Posterior cingulate gyrus (tissue), 11 donors: ENCODE measurements at regions of chr5 and their contacts with region 1.

Region 1: GRCh38 chr5:173057062-173057924 is 1.1 kb downstream of the CREBRF start:
- DNase-seq: peak; percentile 96 to 100 (median 98)

Region 2: GRCh38 chr5:173020643-173021042 is 36.6 kb before region 1 on chr5:
- intact Hi-C with region 1: loop called (anchors 5 kb)
- DNase-seq: peak; percentile 26 to 94 (median 67)

Region 3: DNA sequence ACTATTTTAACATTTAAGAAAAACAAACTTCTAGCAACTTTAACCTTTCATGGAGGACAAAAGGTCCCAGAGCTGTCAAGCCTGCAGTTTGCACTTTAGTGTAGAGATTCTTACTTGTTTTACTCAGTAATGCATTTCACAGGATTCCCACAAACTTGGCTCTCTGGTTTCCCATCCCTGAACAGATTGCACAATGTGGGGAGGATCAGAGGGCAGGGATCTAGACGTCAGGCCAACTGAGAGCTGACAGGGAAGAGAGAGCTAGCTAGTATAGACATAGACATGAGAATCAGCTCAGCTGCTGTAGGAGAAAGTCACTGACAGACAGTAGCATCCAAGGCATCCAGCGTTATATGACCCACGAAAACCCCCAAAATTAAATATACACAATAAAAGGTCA is 66.1 kb after region 1 on chr5:
- intact Hi-C with region 1: no loop called
- DNase-seq: no peak

Region 4: DNA sequence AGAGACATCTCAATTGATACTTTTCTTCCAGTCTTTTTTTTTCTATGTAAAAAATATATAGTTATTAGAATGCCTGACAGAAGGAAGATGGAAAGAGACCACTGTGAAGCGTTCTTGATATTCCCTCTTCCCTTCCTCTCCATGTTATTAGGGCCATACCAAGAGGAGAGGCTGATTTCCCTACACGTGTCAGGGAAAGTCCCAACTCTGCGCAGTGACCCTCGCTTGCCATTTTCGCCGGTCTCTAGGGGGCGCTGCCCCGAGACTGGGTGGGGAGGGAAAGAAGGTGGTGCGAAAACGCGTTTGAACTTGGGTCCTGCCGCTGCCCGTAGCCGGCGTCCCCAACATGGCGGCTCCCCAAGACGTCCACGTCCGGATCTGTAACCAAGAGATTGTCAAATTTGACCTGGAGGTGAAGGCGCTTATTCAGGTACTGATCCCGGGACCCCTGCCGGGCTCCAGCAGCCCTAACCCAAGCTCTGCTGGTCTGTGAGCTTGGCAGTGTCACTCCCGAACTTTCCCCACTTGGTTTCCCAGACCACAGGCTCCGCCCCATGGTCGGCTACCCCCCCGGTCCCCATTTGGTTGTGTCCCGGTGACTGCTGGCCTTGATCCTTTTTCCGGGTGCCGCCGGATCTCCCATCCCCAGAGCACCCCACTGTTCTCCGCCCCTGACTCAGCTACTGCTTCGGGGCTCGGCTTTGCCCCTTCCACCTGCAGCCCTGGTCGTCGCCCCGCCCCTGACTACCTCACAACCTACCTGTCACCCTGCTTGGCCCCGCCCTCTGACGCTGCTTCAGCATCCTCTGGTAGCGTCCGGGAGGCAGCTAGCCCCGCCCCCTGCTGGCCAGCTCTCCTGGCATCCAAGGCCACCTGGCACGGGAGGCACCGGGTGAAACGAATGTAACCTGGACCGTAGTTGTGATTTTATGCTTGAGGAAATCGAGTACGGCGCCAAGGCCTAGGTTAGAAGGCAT is 87.2 kb after region 1 on chr5 and contains the start of gene BNIP1:
- intact Hi-C with region 1: loop called (anchors 2 kb)
- DNase-seq: peak; percentile 85 to 98 (median 92)

Region 5: GRCh38 chr5:173204185-173204979 is 147.1 kb after region 1 on chr5:
- intact Hi-C with region 1: no loop called
- DNase-seq: peak in 1 of 10 donors; percentile 6

Region 6: GRCh38 chr5:173293817-173294672 is 236.8 kb after region 1 on chr5:
- intact Hi-C with region 1: no loop called
- DNase-seq: peak; percentile 60 to 96 (median 84)